Dorsolateral prefrontal cortex (tissue), 120 donors: ENCODE measurements at regions of chr17 and their contacts with region 1.

Region 1: GRCh38 chr17:82236142-82236981 is 7.5 kb downstream of the SLC16A3 start:
- DNase-seq: peak in 8 of 10 donors; percentile 64 to 80 (median 71)
- H3K4me3 ChIP-seq: peak overlapping the region in 6 of 59 donors; percentile 1 to 34 (median 14)
- H3K27ac ChIP-seq: peak overlapping the region in 52 of 59 donors; percentile 5 to 87 (median 54)
- H3K27me3 ChIP-seq: no peaks in the 10 kb centered on the region
- CTCF ChIP-seq: peak; percentile 65 to 97 (median 90)

Region 2: DNA sequence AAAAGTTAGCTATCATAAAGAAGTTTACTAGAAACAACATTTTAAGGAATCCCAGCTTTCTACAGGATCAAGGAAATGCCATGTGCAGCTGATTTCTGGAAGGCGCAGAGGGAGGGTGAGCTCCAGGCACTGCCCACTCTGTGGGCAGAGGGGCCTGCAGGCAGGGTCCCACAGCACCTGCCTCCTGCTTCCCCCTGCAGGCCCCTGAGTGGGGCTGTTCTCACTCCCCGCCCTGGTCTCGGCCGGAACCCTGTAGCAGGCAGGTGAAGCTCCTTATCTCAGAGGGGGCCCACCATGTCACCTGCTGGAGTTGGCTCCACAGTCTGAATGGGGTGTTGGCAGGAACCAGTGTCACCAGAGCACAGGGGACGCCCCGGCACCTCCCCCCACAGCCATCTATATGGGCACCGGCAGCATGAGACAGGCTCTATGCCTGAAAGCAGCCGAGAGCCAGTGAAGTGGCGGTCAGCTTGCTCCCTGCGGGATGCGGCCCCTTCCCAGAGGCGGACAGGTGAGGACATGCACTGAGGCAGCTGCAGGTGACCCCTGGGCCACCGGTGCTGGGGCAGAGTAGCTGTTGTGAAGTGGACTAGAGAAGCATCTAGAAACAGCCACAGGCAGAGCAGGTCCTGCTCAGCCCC is 90.7 kb before region 1 on chr17:
- intact Hi-C with region 1: no loop called
- DNase-seq: no peak
- H3K4me3 ChIP-seq: no peak overlapping the region
- H3K27ac ChIP-seq: no peak overlapping the region
- H3K27me3 ChIP-seq: no peaks in the 10 kb centered on the region
- CTCF ChIP-seq: no peak

Region 3: DNA sequence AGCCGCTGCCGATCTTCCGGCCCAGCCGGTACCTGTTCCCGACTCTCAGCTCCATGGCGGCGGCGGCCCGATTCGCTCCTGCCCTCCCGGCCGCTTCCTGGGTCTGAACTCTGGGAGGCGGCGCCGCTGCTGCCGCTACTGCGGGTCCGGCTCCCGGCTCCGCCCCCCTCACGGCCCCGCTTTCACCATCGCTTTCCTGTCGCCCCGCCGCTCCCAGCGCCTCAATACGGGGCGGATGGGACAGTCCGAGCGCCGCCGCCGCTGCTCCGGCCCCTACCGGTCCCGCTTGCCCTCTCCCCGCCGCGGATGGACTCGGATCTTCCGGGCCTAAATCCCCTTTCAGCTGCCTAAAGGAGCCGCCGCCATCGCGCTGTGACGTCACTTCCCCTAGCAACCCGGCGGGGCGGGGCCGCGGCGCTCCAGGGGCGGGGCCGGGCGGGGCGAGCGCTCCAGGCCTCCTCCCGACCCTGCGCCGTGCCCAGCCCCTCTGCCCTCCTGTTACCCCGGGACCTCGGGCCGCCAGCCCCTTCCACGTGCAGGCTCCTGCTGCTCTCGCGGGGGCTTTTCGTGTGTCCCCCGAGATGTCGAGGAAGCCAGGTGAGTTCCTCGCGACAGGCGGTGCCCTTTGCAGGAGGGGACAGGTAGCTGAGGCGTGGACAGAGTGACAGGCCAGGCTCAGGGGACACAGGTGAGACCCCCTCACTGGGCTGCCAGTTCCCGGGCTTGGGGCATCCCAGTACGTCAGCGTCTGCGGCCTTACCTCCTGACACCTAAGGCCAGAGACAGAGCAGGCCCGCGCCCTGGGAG is 37.2 kb after region 1 on chr17 and contains the start of gene CSNK1D:
- intact Hi-C with region 1: loop called in 1 of 2 experiments (anchors 2 kb)
- DNase-seq: peak; percentile 80 to 94 (median 90)
- H3K4me3 ChIP-seq: peak within 1 kb of the TSS; percentile 71 to 98 (median 93)
- H3K27ac ChIP-seq: peak within 1 kb of the TSS; percentile 75 to 100 (median 97)
- H3K27me3 ChIP-seq: no peaks in the 10 kb centered on the region
- CTCF ChIP-seq: peak in 10 of 56 donors; percentile 13 to 38 (median 22)
- total RNA-seq, gene CSNK1D: 96.2 to 160 (median 125) TPM

Region 4: GRCh38 chr17:82292251-82293154 is 56.1 kb after region 1 on chr17:
- intact Hi-C with region 1: loop called (anchors 2 to 5 kb)
- DNase-seq: peak; percentile 92 to 98 (median 96)
- H3K4me3 ChIP-seq: peak overlapping the region; percentile 65 to 100 (median 93)
- H3K27ac ChIP-seq: peak overlapping the region; percentile 84 to 99 (median 95)
- H3K27me3 ChIP-seq: no peaks in the 10 kb centered on the region
- CTCF ChIP-seq: peak in 3 of 56 donors; percentile 6 to 17 (median 13)

Region 5: GRCh38 chr17:82297714-82298537 is 61.6 kb after region 1 on chr17:
- intact Hi-C with region 1: loop called (anchors 2 to 5 kb)
- DNase-seq: peak; percentile 42 to 89 (median 75)
- H3K4me3 ChIP-seq: peak overlapping the region; percentile 27 to 73 (median 53)
- H3K27ac ChIP-seq: peak overlapping the region in 58 of 59 donors; percentile 42 to 94 (median 86)
- H3K27me3 ChIP-seq: no peaks in the 10 kb centered on the region
- CTCF ChIP-seq: peak in 7 of 56 donors; percentile 7 to 24 (median 13)

Region 6: GRCh38 chr17:82320956-82321927 is 84.9 kb after region 1 on chr17:
- intact Hi-C with region 1: loop called in 1 of 2 experiments (anchors 5 kb)
- DNase-seq: peak in 2 of 10 donors; percentile 27 to 61
- H3K4me3 ChIP-seq: peak overlapping the region in 19 of 59 donors; percentile 10 to 45 (median 30)
- H3K27ac ChIP-seq: no peak overlapping the region
- H3K27me3 ChIP-seq: peaks cover 0 to 23% (median 0%) of the 10 kb centered on the region in 45 donors
- CTCF ChIP-seq: peak; percentile 48 to 97 (median 85)

Region 7: DNA sequence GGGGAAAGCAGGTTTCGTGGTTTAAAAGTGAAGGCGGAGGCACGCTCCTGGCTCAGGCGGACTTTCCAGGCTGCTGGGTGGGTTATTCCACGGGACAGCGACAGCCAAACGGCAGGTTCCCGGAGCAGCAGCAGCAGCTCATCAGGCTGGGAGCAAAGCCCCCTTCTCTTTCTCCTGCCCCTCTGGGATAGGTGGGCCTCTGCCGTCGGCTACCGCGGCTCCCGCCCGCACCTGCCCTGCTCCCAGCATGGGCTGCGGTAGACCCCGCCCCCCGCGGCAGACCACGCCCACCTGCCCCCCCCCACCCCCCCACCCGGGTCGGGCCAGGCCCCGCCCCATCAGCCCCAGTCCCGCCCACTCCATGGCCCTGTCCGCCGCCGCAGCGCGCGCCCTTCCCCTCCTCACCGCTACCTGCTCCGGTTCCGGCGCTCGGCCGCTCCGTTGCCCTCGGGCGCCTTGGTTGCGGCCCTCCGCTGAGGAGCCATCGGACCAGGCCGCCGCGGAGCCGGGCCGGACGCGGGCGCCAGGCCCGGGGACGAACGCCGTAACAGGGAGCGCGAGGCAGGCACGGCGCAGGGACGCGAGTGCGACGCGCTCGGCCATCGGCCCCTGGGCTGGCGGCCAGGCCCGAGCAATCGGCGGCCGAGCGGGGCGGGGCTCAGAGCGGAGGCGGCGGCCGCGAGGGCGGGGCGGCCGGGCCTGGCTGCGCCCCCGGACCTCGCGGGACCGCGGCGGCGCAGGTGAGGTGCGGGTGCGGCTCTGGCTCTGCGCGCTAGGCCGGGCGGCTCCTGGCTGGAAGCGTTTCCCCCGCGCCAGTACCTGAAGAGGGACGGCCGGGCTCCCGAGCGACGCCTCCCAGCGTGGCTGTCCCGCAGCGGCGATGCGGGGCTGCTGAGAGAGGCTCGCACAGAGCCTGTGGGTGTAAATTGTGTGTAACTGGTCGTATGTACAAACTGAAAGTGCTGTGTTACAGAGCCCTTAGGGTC is 181.9 kb after region 1 on chr17 and contains the starts of genes HEXD and OGFOD3:
- intact Hi-C with region 1: loop called (anchors 5 to 10 kb)
- DNase-seq: peak; percentile 52 to 92 (median 76)
- H3K4me3 ChIP-seq: peak within 1 kb of the TSS; percentile 58 to 97 (median 87)
- H3K27ac ChIP-seq: peak within 1 kb of the TSS in 58 of 59 donors; percentile 59 to 97 (median 89)
- H3K27me3 ChIP-seq: no peaks in the 10 kb centered on the region
- CTCF ChIP-seq: peak in 12 of 56 donors; percentile 10 to 37 (median 24)
- total RNA-seq, gene HEXD: 15.3 to 59.1 (median 29.4) TPM
- total RNA-seq, gene OGFOD3: 20.4 to 48.6 (median 30.7) TPM